ENCODE measurements at regions of chr21 and their contacts with region 1.

Region 1: DNA sequence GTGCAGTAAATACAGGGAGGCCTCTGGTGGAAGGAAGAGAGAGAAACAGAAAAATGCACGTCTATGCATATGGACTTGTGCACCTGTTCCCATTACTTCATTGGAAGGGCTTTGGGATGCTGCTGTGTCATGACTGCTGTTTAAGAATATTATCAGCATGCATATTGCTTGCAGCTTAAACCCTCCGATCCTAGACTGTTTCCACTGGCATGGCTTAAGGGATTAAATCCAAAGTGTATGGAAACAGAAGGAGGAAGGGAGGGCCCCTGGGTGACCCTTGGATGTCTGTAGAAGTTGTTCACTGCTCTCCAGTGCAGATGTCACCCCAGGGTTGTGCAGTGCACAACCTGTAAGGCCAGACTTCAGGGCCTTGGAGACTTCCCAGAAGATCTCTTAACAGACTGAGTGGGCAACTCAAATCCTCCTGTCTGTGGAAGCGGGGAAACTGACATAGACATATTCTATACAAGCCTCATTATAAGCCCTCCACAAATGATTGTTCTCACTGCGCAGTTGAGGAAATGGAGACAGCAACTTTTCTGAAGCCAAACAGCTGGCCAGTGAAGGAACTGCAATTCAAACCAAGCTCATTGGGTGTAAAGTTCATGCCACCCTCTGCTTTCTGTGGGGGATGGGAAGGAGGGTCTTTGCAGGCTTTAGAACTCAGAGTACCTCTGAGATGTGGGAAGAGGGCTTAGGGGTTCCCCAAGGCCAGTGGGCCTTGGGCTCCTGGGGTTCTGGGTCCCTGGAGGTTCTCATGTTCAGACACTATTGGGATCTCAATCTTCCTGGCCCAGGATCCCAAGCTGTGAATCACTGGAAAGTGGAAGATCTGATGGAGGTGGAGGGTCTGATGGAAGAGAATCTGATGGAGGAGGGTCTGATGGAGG is 73.8 kb downstream of the UMODL1 start:
- DNase-seq: no peak
- ATAC-seq: no peak

Region 2: GRCh38 chr21:41953831-41954653 is 190.9 kb before region 1 on chr21 and contains the start of gene C2CD2:
- intact Hi-C with region 1: no loop called
- DNase-seq: peak; percentile 83
- ATAC-seq: peak; percentile 86
- total RNA-seq, gene C2CD2: 4.6 TPM

Region 3: DNA sequence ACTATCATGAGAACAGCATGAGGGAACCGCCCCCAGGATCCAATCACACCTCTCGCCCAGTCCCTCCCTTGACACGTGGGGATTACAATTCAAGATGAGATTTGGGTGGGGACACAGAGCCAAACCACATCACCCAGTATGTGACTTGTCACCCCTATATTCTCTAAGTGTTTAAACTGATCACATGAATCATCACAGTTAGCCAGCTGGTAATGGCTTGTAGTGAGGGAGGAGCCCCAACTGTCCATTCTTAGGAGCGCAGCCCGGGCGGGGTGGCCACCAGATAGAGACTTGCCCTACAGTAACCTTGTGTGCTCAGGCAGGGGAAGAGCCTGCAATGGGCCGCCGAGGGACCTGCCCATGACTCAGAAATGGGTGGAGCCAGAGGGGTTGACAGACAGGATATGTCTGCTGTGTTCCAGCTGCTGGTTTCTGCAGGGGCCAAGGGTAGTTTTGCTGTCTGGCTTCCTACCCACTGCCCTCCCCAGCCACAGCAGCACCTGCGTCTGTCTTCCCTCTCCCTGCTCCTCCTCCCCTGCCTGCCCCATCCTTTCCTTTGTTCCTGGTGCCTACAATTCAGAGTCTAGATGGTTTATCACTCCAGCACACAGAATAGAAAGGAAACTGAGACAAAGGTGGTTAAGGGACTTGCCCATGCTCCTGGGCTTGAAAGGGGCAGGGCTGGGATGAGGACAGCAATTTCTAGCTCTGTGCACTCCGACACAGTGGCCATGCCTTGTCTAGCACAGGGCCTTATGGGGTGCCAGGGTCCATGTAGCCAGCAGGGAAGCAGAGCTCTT is 83.2 kb after region 1 on chr21:
- intact Hi-C with region 1: no loop called
- DNase-seq: peak; percentile 95
- ATAC-seq: peak; percentile 96

Region 4: DNA sequence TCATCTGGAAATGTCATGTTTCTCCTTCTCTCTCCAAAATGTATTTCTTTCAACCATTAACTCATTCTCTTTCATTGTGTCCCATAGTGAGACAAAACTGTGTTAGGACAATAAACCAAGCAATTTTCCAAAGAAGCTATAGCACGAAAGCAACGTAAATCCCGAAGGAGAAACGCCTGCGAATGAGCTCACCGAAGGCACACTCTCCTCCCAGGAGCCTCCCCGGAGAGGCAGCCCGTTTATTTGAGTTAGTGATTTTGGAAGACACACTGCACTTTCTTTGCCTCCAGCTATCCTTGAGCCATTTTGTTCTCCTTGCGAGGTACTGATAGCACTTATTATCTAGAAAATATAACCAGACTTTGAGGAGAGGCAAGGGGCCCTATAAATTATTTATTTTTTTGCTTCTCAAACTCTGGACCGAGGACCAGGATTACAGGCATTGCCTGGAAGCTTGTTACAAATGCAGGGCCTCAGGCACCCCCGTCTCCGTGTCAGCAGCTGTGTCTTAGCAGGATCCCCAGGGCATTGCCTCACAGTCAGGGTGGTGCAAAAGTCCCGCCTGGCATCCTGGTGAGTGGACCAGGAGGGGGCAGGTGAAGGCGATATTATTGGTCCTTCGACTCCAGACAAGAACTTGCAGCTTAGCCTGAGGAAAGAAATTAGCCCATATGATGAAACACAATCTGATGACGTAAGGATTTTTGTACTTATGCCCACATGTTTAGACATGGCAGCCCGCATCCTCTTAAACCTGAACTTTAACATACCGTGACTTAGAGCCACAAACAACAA is 310.1 kb after region 1 on chr21:
- intact Hi-C with region 1: loop called (anchors 5 kb)
- DNase-seq: no peak
- ATAC-seq: no peak

Measured in Right ventricle myocardium superior (tissue), 1 donor.